ENCODE measurements at regions of chr6 and their contacts with region 1.

Region 1: DNA sequence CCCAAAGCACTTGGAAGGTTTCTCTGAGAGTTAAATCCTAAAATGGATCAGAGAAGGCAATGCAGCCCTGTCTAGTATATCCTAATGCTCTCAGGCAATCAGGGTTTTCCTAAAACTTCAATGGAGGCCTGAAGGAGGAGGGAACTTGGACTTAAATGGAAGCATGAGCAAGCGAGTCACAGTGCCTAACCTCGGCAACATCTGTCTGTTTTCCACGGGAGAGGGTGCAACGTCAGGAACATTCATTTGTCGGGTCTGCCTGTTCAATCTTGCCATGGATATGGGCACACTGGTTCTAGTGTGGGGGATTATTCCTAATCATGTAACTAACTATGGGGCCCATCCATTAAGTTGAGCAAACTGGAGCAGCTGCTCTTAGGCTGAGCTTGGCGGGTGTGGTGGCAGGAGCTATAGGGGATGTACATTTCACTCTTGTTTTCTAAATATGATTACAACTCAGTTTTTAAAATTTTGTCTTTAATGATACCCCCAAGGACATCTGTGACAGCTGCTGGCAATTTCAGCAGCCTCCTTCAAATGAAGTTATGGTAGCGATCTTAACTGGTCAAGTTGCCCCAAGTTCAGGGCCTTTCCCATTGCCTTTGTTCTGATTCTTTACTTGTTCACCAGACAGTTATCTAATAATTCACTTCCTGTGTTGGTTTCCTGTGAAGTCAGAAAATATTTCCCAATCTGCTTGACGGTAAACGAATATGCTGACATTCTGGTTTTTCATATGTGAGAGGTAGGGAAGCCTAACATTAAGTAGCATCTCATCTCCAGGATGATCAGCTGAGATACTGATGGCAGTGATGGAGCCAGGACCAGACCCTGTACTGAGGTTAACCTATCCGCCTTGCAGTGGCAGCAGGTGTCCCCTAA is 21.6 kb downstream of the DSE start:
- DNase-seq: no peak
- H3K4me3 ChIP-seq: no peak overlapping the region
- H3K27ac ChIP-seq: peak overlapping the region in 5 of 59 donors; percentile 0 to 50 (median 17)
- H3K27me3 ChIP-seq: no peaks in the 10 kb centered on the region
- CTCF ChIP-seq: no peak

Region 2: DNA sequence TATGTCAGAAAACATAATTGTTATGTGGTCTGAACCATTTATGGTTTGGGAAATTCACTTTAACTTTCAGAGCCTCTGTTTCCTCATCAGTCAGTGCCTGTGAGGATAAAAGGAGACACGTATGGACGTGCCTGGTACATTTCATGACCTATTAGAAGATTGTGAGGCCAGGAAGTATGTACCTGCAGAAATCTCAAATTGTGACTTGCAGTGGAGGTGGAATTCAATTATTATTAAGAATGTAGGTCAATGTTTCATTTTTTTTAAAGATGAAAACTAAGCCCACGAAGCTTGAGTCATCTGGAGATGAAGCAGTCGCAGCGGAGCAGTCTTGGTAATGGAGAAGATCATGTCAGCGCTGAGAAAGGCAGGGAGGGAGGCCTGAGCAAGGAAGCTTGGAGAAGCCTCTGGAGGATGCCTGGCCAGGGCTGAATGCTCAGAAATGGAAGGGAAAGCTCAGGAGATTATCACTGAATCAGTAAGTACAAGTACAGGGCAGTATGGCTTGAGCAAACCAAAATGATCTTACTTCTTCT is 25.6 kb before region 1 on chr6:
- intact Hi-C with region 1: loop called in 1 of 2 experiments (anchors 2 kb)
- DNase-seq: no peak
- H3K4me3 ChIP-seq: no peak overlapping the region
- H3K27ac ChIP-seq: peak overlapping the region in 43 of 59 donors; percentile 2 to 82 (median 49)
- H3K27me3 ChIP-seq: no peaks in the 10 kb centered on the region
- CTCF ChIP-seq: no peak

Region 3: GRCh38 chr6:116500969-116501433 is 108.6 kb after region 1 on chr6:
- intact Hi-C with region 1: no loop called
- DNase-seq: no peak
- H3K4me3 ChIP-seq: no peak overlapping the region
- H3K27ac ChIP-seq: no peak overlapping the region
- H3K27me3 ChIP-seq: peaks cover 0 to 12% (median 0%) of the 10 kb centered on the region in 45 donors
- CTCF ChIP-seq: no peak

Measured in dorsolateral prefrontal cortex (tissue), 120 donors.